OCI-LY7 (cell line): ENCODE measurements at regions of chr2 and their contacts with region 1.

Region 1: GRCh38 chr2:111120253-111121027 is at the start of gene BCL2L11:
- DNase-seq: peak; percentile 95
- H3K4me3 ChIP-seq: peak within 1 kb of the TSS; percentile 96
- H3K27ac ChIP-seq: peak within 1 kb of the TSS; percentile 75
- H3K4me1 ChIP-seq: peaks cover 48% of the 10 kb centered on the region
- CTCF ChIP-seq: peak; percentile 64
- total RNA-seq, gene BCL2L11: 10.9 and 16.0 TPM in 2 replicates

Region 2: DNA sequence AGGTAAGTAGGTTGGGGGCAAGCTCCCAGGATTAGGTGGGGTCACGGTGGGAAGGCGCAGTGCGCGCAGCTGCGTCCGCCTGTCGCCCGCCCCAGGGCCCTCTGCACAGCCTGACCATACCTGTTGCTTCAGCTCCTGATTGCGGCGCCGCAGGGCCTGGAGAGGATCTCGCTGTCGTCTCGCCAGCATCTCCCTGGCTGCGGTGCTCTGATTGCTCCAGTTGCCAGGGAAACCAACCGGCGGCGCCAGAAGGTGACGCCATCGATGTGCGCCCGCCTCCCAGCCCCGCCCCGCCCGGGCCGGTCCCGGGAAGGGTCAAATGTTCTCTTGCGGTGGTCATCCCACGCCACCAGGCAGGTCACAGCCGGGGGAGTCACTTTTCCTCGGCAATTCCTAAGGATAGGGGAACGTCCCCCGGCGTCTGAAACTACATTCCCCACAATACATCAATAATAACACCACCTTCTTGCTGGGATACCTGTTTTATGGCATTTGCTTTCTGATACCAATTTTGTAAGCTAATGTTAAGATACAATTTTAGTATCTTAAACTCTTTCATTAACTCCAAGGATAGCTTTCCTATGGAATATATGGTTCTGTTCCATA is 915.6 kb before region 1 on chr2 and contains the start of gene NPHP1:
- CTCF ChIA-PET with region 1: no interaction called
- POLR2A ChIA-PET with region 1: no interaction called
- intact Hi-C with region 1: no loop called
- DNase-seq: peak; percentile 83
- H3K4me3 ChIP-seq: peak within 1 kb of the TSS; percentile 76
- H3K27ac ChIP-seq: no peak within 1 kb of the TSS
- H3K4me1 ChIP-seq: peaks cover 6% of the 10 kb centered on the region
- CTCF ChIP-seq: no peak
- total RNA-seq, gene NPHP1: 0.85 and 1.6 TPM in 2 replicates

Region 3: GRCh38 chr2:110677530-110678456 is 442.6 kb before region 1 on chr2 and contains the start of gene BUB1:
- CTCF ChIA-PET with region 1: no interaction called
- POLR2A ChIA-PET with region 1: interaction called, 3 read pairs
- intact Hi-C with region 1: loop called (anchors 10 kb)
- DNase-seq: peak; percentile 96
- H3K4me3 ChIP-seq: peak within 1 kb of the TSS; percentile 92
- H3K27ac ChIP-seq: peak within 1 kb of the TSS; percentile 91
- H3K4me1 ChIP-seq: peaks cover 34% of the 10 kb centered on the region
- CTCF ChIP-seq: no peak
- total RNA-seq, gene BUB1: 107 and 125 TPM in 2 replicates

Region 4: DNA sequence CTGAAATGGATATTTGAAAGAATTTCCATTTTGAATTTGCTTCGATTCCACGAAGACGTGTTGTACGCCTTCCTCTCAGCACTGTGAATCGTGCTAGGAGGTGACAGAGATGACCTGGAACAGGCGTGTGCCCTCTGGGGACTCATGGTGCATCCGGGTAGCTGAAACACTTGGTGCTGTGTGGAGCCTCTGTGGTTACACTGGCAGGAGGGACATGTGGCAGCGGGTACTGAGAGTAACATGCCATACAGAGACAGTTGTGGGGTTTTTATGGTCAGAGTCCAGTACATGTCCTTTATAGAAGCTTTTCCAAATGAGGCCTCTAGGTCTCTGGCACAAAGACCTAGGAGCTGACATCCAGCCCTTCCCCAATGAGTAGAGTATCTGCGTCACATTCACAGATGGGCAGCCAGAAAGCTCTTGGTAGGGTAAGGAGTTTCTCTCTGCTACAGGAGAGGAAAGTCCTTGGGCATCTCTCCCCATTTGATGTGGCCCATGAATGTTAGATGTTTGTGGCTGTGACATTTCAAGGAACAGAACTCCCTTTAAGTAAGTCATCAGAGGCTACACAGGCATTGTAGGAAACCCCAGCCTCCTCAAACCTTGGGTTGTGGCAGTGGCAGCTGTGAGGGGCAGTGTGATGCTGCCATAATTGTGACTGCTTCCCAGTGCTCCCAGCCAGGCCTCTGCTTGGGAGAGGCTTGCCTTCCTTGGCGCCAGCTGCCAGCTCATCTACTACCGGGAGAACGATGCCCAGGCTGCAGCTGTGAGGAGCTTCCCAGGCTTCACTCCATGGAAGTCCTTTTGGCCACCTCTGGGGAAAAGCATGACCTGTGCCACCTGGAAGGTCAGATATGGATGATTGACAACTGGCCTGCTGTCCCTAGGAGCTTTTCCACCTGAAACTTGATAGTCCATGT is 307.5 kb before region 1 on chr2:
- CTCF ChIA-PET with region 1: no interaction called
- POLR2A ChIA-PET with region 1: no interaction called
- intact Hi-C with region 1: loop called (anchors 5 kb)
- DNase-seq: no peak
- H3K4me3 ChIP-seq: no peak overlapping the region
- H3K27ac ChIP-seq: no peak overlapping the region
- H3K4me1 ChIP-seq: peaks cover 12% of the 10 kb centered on the region
- CTCF ChIP-seq: no peak

Region 5: GRCh38 chr2:110955556-110955955 is 164.9 kb before region 1 on chr2:
- CTCF ChIA-PET with region 1: no interaction called
- POLR2A ChIA-PET with region 1: no interaction called
- intact Hi-C with region 1: no loop called
- DNase-seq: no peak
- H3K4me3 ChIP-seq: no peak overlapping the region
- H3K27ac ChIP-seq: no peak overlapping the region
- H3K4me1 ChIP-seq: no peaks in the 10 kb centered on the region
- CTCF ChIP-seq: no peak

Region 6: DNA sequence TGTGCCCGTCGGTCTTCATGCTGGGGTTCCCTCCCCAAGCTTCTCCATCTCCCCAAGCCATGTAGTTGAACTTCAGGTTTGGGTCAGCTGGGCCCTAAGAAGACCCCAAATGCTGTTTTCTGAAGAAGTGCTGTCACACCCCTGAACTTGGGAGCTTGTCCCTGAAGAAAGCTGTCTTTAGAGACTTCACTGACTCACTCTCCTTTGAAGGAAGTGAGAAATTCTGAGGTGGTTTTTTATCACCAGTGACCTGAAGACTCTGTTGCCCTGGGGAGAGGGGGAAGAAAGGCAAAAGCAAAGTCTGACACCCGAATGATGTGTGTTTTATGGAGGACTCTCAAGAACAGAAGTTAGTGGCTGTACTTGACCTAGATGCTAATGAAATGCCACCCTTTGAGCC is 83.3 kb before region 1 on chr2:
- CTCF ChIA-PET with region 1: no interaction called
- POLR2A ChIA-PET with region 1: interaction called, 3 read pairs
- intact Hi-C with region 1: loop called (anchors 2 kb)
- DNase-seq: peak; percentile 61
- H3K4me3 ChIP-seq: peak overlapping the region; percentile 30
- H3K27ac ChIP-seq: peak overlapping the region; percentile 66
- H3K4me1 ChIP-seq: peaks cover 80% of the 10 kb centered on the region
- CTCF ChIP-seq: no peak

Region 7: GRCh38 chr2:111049792-111050640 is 70.4 kb before region 1 on chr2:
- CTCF ChIA-PET with region 1: no interaction called
- POLR2A ChIA-PET with region 1: no interaction called
- intact Hi-C with region 1: no loop called
- DNase-seq: peak; percentile 84
- H3K4me3 ChIP-seq: peak overlapping the region; percentile 60
- H3K27ac ChIP-seq: peak overlapping the region; percentile 89
- H3K4me1 ChIP-seq: peaks cover 77% of the 10 kb centered on the region
- CTCF ChIP-seq: no peak

Region 8: GRCh38 chr2:111194835-111195621 is 74.6 kb after region 1 on chr2:
- CTCF ChIA-PET with region 1: no interaction called
- POLR2A ChIA-PET with region 1: no interaction called
- intact Hi-C with region 1: no loop called
- DNase-seq: no peak
- H3K4me3 ChIP-seq: no peak overlapping the region
- H3K27ac ChIP-seq: no peak overlapping the region
- H3K4me1 ChIP-seq: no peaks in the 10 kb centered on the region
- CTCF ChIP-seq: no peak

Region 9: DNA sequence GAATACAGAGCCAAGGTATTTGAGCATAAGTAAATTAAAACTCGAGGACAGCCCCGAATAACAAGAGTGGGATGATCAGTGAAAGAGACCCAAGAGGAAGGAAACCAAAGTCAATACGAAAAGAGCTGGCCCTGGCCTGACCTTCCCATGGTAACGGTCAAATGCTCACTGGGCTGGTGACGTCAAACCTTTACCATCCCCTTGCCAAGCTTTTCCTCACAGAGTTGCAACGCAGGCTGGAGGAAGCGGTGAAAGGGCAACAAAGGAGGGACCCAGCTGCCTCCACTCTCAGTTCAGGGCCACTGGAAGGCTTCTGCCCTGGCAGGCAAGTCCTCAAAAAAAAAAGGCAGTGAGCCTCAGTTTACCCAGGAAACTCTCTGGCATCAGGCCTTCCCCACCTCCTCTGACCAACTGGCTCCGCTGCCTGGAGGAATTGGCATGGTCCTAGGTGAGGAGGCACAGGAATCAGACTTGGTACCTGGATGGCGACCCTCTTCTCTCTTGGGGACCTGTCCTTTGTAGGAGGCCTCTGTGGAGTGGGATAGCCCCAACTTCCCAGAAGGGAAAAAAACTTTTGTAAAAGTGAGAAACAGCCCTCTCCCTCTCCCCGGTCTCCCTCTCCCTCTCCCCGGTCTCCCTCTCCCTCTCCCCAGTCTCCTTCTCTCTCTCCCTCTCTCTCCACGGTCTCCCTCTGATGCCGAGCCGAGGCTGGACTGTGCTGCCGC is 551.1 kb after region 1 on chr2:
- CTCF ChIA-PET with region 1: no interaction called
- POLR2A ChIA-PET with region 1: no interaction called
- intact Hi-C with region 1: loop called (anchors 10 kb)
- DNase-seq: peak; percentile 35
- H3K4me3 ChIP-seq: no peak overlapping the region
- H3K27ac ChIP-seq: peak overlapping the region; percentile 96
- H3K4me1 ChIP-seq: peaks cover 68% of the 10 kb centered on the region
- CTCF ChIP-seq: no peak